Ascending aorta (tissue), 2 donors: ENCODE measurements at regions of chr21 and their contacts with region 1.

Region 1: GRCh38 chr21:31088315-31088714 is 50.0 kb upstream of the KRTAP19-8 start:
- DNase-seq: no peak
- H3K4me3 ChIP-seq: no peak overlapping the region
- H3K27ac ChIP-seq: no peak overlapping the region
- H3K4me1 ChIP-seq: no peaks in the 10 kb centered on the region
- H3K27me3 ChIP-seq: no peaks in the 10 kb centered on the region
- CTCF ChIP-seq: no peak

Region 2: DNA sequence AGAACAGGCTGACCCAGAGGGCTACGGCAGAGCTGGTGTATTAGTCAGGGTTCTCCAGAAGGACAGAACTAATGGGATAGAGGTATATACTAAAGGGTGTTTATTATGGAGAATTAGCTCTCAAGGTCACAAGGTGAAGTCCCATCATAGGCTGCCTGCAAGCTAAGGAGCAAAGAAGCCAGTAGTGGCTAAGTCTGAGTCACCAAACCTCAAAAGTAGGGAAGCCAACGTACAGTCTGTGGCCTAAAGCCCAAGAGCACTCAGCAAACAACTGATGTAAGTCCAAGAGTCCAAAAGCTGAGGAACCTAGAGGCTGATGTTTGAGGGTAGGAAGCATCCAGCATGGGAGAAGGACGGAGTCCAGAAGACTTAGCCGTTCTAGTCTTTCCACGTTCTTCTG is 1610.4 kb before region 1 on chr21:
- intact Hi-C with region 1: loop called (anchors 5 kb)
- DNase-seq: no peak
- H3K4me3 ChIP-seq: no peak overlapping the region
- H3K27ac ChIP-seq: no peak overlapping the region
- H3K4me1 ChIP-seq: no peaks in the 10 kb centered on the region
- H3K27me3 ChIP-seq: no peaks in the 10 kb centered on the region
- CTCF ChIP-seq: no peak

Region 3: DNA sequence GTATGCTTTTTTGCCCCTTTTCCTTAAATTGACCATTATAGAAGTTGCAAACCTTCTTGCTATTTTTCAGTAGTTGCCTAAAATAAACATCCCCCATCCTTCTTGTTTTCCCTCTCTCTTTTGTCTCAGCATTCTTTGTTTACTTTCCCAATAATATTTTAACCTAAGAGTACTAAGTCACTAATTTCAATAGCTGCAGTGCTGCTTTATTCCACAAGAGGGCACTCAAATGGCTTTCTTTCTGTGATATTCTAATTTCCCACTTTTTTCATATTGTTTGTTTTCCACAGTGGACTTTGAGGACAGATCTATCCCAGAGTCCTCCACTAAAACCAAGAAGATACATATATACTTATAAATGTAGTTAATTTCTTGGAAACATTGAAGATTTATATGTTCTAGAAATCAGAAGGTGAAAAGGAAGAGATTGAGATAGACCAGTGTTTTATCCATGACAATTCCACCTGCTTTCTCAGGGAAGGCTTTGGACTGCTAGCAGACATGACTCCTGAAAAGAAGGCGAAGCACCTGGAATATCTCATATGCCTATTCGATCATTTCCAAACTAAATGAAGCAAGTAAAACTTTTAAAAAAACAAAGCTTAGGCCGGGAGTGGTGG is 1043.8 kb before region 1 on chr21:
- intact Hi-C with region 1: loop called (anchors 10 kb)
- DNase-seq: no peak
- H3K4me3 ChIP-seq: no peak overlapping the region
- H3K27ac ChIP-seq: no peak overlapping the region
- H3K4me1 ChIP-seq: no peaks in the 10 kb centered on the region
- H3K27me3 ChIP-seq: no peaks in the 10 kb centered on the region
- CTCF ChIP-seq: peak; percentile 31 to 82 (median 70)